ENCODE measurements at regions of chr22 and their contacts with region 1.

Region 1: DNA sequence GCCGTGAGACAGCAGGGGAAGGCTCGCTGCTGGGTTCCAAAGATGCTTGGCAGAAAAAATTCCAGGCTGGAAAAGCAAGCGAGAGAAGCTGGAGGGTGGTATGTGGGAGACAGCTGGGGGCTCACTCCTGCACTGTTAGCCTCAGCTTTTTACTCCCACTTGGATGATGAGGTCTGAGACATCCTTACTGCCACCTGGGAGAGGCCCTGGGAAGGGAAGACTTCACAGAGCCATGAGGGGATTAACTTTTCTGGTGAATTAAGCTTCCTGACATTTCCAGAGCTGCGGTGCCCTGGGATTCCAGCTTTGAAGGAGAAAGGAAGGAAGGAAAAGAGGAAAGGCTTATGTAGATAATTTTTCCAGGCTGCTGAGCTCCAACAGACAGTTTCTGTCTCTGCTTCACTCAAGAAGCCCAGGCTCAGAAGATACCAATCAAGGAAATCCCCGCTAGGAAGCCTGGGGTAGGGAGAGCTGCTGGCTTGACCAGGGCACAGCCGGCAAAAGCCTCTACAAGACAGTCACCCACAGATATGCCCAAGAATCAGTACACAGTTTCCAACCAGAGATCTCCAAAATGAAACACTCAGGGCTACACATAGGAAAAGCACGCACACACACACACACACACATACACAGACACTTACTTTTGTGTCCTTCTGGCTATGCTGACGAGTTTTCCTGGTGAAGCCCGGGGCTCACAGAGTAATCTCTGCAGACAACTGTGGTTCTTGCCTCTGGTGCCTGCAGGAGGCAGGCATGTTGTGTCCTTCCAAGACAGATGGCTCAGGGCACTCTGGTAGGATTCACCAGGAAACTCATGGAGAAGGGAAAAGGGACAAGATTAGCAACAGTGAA is 907 bp downstream of the MCHR1 start:
- DNase-seq: no peak
- ATAC-seq: no peak
- H3K4me3 Mint-ChIP-seq: no peak overlapping the region
- H3K27ac Mint-ChIP-seq: no peak overlapping the region
- H3K4me1 Mint-ChIP-seq: peaks cover 31% of the 10 kb centered on the region
- H3K27me3 Mint-ChIP-seq: peaks cover 16% of the 10 kb centered on the region

Region 2: DNA sequence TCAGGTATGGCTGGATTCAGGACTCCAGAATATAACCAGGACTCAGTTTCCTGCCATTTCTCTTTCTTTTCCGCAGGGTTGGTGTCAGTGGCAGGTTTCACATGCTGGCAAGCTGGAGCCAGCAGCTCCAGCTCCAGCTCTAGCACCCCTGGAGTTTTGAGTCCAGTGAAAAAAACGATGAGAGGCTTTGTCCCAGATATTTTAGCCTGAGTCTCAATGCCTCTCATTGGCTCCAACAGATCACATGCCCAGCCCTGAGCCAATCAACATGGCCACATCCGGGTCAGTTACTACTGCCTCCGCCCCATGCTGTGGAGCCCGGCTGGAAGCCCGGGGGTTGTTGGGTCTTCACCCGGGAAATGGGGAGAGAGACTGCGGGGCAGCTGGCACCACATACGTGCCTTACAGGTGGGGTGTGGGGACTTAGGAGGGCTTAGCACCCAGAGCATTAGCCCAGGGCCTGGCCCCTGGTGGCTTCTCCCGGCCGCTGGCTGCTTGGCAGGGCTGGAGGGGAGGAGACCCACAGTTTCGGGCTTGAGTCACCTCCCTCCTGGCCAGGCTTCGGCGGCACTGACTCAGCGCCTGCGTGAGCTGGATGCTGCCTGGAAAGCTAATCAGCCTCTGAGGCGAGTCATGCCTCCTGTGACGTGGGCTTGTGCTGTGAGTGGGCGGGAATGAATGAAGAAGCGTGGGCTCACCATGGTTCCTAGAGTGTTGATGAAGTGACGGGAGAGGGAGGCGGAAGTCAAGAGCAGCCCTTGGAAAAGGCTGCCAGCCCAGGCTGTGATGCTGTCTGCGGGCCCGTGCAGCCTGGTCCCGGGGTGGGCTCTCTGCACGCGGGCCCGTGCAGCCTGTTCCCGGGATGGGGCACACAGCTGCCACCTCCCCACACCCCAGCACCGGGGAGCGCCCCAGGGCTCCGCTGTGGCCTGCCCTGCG is 28.4 kb before region 1 on chr22:
- CTCF ChIA-PET with region 1: interaction called, 18 read pairs
- DNase-seq: peak; percentile 91
- ATAC-seq: peak; percentile 96
- H3K4me3 Mint-ChIP-seq: peak overlapping the region; percentile 59
- H3K27ac Mint-ChIP-seq: peak overlapping the region; percentile 68
- H3K4me1 Mint-ChIP-seq: peaks cover 26% of the 10 kb centered on the region
- H3K27me3 Mint-ChIP-seq: no peaks in the 10 kb centered on the region

Region 3: GRCh38 chr22:40714192-40714951 is 34.2 kb after region 1 on chr22:
- CTCF ChIA-PET with region 1: interaction called, 28 read pairs
- DNase-seq: no peak
- ATAC-seq: no peak
- H3K4me3 Mint-ChIP-seq: no peak overlapping the region
- H3K27ac Mint-ChIP-seq: no peak overlapping the region
- H3K4me1 Mint-ChIP-seq: peaks cover 32% of the 10 kb centered on the region
- H3K27me3 Mint-ChIP-seq: peaks cover 13% of the 10 kb centered on the region

Region 4: DNA sequence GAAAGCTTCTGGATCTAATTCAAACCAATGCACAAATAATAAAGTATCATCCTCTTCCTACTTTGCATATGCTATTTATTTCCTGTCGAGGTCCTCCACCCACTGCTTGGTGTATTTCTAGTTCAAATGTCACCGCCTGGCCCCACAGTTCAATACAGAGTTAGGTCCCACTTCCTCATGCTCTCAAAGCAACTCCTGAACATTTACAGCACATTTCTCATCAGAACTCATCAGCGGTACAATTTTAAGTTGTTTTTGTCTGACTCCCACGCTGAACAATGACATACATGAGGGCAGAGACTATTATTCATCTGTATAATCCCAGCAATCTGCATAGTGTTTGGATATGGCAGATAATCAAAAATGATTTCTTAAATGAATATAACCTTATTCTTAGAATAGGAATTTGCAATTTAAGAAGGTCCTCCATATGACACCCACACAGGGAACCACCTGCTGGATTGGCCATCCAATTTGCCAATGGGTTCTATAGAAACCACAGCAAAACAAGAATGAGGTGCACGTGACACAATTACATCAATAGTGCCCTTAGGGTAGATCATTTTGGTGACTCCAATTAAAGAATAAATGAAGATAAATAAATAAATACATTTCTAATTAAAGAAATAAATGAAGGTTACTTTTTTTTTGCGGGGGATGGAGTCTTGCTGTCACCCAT is 84.7 kb after region 1 on chr22:
- CTCF ChIA-PET with region 1: interaction called, 116 read pairs
- DNase-seq: no peak
- ATAC-seq: no peak
- H3K4me3 Mint-ChIP-seq: no peak overlapping the region
- H3K27ac Mint-ChIP-seq: peak overlapping the region; percentile 39
- H3K4me1 Mint-ChIP-seq: peaks cover 10% of the 10 kb centered on the region
- H3K27me3 Mint-ChIP-seq: no peaks in the 10 kb centered on the region

Region 5: DNA sequence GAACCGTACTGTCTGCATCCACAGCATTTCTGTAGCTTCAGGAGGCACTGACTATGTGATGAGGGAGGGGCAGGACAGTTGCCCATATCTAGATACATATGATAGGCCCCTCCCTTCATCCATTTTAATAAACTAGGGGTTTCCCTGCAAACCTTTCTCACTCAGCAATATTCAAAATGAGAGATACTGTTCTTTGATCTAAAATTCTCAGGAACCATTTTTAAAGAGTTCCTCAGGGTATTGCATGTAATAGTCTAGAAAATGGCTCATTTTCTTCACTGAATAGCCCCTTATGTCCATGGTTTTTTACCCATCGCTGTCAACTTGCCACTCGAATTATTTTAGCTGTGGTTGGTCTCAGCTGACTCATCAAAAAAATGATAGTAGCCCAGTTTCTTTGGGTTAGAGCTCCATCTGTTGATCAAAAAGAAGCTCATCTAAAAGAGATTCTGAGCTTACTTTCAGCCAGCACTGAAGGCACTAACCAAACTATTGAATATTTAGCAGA is 218.7 kb after region 1 on chr22:
- CTCF ChIA-PET with region 1: interaction called, 56 read pairs
- DNase-seq: no peak
- ATAC-seq: peak; percentile 80
- H3K4me3 Mint-ChIP-seq: peak overlapping the region; percentile 33
- H3K27ac Mint-ChIP-seq: peak overlapping the region; percentile 71
- H3K4me1 Mint-ChIP-seq: peaks cover 16% of the 10 kb centered on the region
- H3K27me3 Mint-ChIP-seq: no peaks in the 10 kb centered on the region

Measured in activated CD8-positive, alpha-beta memory T cell treated with anti-CD3 and anti-CD28 coated beads, Interleukin-2, amount 10 ng/mL, durations not matched to agents 7 days and 5 days (primary cell).